Activated T-helper 1 cell treated with anti-CD3 and anti-CD28 coated beads, Interleukin-12 subunit alpha, Interleukin-12 subunit beta, Interleukin-2, Interleukin-4 antibody, amounts not matched to agents 30 ng/mL and 10 ng/mL and 1 ng/mL, durations not matched to agents 14 hours and 24 hours and 36 hours (primary cell): ENCODE measurements at regions of chr4 and their contacts with region 1.

Region 1: DNA sequence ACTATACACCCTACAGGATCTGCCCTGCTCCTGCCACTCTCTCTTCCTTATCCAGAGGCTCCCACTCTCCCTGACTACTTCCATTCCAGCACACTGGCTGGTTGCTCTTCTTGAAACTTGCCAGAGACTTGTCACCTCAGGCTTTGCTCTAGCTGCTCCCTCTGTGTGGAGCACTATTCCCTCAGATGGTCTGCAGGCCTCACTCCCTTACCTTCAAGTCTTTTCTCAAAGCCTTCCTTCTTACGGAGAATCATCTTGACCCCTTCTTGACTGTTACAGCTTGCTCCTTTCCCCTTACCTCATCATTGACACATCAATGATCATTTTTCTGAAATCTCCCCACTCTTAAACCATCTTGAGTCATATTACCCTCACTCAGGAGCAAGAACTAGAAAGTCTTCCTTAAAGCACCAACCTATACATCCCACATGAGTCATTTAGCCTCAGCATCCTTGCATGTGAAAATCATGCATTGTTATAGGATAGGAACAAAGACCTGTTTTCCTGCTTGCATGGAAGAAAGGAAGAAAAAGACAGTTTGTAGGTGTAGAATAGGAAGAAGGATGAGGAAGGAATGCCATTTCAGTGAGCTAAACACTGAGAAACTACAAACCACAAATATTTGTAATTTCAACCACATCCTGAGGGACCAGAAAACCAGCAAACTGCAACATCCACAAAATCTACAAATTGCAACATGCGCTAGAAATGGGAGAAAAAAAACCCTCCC is 55.7 kb downstream of the ANTXR2 start:
- DNase-seq: no peak
- H3K4me3 Mint-ChIP-seq: no peak overlapping the region
- H3K27ac Mint-ChIP-seq: peak overlapping the region; percentile 57
- H3K4me1 Mint-ChIP-seq: peaks cover 19% of the 10 kb centered on the region
- H3K27me3 Mint-ChIP-seq: no peaks in the 10 kb centered on the region

Region 2: DNA sequence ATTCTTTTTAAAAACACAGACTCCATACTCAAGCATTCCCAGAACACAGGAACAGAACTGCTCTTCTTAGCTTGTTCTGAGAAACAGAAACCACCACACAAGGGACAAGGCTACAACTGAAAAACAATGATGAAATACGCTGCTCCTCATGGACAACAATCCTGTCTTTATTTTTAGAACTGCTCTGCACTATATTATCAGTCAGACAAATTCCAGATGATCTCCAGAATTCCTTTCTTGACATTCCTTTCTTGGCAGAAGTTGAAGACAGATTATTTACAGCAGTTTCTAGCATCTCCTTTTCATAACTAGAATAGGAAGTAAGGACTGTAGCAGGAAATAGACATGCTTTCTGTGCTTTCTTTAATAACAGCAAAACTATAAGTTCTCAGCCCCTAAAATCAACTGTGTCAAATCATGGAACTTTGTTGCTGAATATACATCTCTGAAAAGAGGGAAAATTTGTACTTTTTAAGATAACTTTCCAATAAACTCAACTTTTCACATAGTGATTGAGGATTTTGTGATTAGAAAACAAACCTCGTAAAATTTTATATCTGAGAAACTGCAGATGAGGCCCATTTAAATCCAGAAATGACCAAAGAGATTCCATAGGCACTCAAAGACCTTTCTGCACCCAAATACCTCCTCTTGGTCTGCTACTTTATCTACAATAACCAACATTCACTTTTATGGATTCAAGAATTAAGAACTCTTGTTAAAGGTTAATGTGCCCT is 19.8 kb after region 1 on chr4:
- intact Hi-C with region 1: loop called (anchors 2 kb)
- DNase-seq: no peak
- H3K4me3 Mint-ChIP-seq: peak overlapping the region; percentile 71
- H3K27ac Mint-ChIP-seq: peak overlapping the region; percentile 93
- H3K4me1 Mint-ChIP-seq: peaks cover 48% of the 10 kb centered on the region
- H3K27me3 Mint-ChIP-seq: no peaks in the 10 kb centered on the region

Region 3: DNA sequence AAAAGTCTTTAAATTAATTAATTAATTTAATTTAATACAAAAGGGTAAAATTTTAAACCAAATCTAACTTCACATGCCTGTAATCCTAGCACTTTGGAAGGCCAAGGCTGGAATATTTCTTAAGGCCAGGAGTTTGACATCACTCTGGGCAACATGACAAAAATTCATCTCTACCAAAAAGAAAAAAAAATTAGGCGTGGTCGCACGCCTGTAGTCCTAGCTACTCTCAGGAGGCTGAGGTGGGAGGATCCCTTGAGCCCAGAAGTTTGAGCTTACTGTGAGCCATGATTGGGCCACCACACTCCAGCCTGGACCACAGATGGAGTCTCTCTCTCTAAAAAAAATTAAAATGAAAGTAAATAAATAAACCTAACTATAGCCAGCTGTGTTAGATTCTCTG is 94.9 kb after region 1 on chr4:
- intact Hi-C with region 1: no loop called
- DNase-seq: no peak
- H3K4me3 Mint-ChIP-seq: no peak overlapping the region
- H3K27ac Mint-ChIP-seq: no peak overlapping the region
- H3K4me1 Mint-ChIP-seq: peaks cover 5% of the 10 kb centered on the region
- H3K27me3 Mint-ChIP-seq: peaks cover 8% of the 10 kb centered on the region

Region 4: GRCh38 chr4:80215449-80216052 is 198.3 kb after region 1 on chr4:
- intact Hi-C with region 1: no loop called
- DNase-seq: no peak
- H3K4me3 Mint-ChIP-seq: no peak overlapping the region
- H3K27ac Mint-ChIP-seq: no peak overlapping the region
- H3K4me1 Mint-ChIP-seq: peaks cover 5% of the 10 kb centered on the region
- H3K27me3 Mint-ChIP-seq: peaks cover 45% of the 10 kb centered on the region